ENCODE measurements at regions of chr2 and their contacts with region 1.

Region 1: DNA sequence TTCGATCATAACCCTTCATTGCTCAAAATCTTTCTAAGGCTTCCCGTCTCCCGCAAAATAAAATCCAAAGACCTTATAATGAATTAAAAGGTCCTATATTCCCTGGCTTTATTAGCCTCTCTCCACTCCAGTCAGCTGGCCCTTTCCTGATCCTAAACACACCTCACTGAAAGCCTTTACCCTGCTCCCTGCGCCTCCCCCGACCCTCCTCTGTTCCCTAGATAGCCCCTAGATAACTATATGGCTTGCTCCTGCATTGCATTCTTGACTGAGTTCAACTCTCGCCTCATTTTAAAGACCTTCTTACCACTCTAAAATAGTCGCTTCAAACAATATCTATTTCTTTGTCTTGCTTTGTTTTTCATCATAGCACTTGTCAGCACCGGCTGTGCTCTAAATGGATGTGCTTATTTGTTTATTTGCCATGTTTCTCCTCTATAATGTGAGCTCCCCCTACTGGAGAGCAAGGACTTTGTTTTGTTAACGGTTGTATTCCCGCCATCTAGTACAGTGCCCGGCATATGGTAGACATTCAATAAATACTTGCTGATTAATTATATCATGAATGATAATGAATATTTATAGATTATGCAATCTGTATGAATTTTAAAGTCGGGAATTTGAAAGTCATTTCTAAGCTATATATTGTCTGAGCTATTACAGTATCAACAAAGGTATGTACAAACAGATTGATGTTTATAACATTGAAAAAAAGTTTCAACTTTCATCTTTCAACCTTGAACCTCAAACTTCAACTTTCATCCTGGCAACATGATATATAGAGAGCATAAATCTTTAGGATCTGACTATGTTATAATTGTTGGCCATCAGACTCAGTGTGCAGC is 32.4 kb upstream of the VIT start:
- DNase-seq: no peak
- H3K4me3 ChIP-seq: no peak overlapping the region
- H3K27ac ChIP-seq: no peak overlapping the region
- H3K27me3 ChIP-seq: no peaks in the 10 kb centered on the region
- CTCF ChIP-seq: peak; percentile 74

Region 2: DNA sequence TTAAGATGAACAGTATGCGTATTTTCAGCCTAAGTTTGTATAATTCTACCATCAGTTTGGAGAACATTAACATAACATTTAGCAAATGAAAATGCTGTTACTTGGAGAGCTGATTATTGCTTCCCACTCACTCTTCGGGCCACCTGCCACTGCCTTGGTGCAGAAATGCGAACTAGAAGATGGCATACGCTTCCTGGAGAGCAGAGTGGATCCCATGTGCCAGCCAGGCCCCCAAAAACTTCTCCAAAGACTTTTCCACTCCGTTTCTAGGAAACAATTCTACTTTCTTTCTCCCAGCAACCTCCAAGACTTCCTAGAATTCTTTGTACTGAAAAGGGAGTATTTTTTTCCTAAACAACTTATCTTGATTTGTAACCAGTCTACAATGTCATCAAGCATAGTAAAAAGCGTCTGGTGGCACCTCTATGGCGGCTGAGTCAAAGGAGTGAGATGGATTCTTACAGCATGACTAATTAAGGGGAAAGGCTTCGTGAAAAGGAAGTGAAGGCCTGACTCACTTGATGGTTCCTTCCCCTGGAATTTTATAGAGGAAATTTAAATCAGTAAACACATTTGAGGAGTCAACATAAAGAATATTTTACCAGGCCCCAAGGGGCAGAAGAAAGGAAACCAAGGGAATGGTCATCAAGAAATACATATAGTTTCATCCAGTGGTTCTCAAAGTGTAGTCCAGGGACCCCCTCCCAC is 102.7 kb before region 1 on chr2:
- CTCF ChIA-PET with region 1: interaction called, 29 read pairs
- POLR2A ChIA-PET with region 1: interaction called, 5 read pairs
- DNase-seq: peak; percentile 66
- H3K4me3 ChIP-seq: no peak overlapping the region
- H3K27ac ChIP-seq: peak overlapping the region; percentile 83
- H3K27me3 ChIP-seq: no peaks in the 10 kb centered on the region
- CTCF ChIP-seq: no peak

Region 3: DNA sequence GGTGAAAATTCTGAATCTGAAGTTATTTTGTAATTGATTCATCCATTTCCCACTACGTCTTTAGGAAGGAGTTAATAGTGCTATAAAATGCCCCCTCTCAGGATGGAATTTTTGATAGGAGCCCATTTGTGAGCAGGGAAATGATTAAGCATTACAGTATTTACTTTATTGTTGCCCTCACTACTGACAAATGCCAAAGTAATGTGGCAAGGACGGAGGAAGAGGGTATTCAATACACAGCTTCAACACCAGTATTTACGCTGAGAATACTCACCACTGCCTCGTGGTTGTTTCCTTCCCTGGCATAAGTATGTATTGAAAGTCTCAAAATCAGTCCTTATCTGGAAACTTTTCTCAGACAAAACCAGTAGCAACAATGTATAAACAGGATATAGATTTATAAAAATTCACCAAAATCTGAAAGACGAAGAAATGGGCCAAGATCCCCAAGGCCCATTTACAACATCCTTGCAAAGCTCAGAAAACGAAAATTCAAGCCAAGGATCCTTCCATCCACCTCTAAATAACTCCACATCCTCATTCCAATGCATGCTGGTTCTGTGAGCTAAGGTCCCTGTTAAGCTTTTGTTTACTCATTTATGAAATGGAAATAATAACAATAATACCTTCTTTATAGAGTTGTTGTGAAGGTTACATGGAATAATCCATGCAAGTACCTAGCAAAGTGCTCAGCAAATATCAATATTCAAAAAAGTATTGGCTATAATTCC is 95.4 kb before region 1 on chr2:
- CTCF ChIA-PET with region 1: interaction called, 29 read pairs
- POLR2A ChIA-PET with region 1: no interaction called
- DNase-seq: no peak
- H3K4me3 ChIP-seq: peak overlapping the region; percentile 20
- H3K27ac ChIP-seq: no peak overlapping the region
- H3K27me3 ChIP-seq: no peaks in the 10 kb centered on the region
- CTCF ChIP-seq: no peak

Region 4: GRCh38 chr2:36650031-36650430 is 14.0 kb before region 1 on chr2:
- CTCF ChIA-PET with region 1: interaction called, 15 read pairs
- POLR2A ChIA-PET with region 1: no interaction called
- DNase-seq: no peak
- H3K4me3 ChIP-seq: no peak overlapping the region
- H3K27ac ChIP-seq: no peak overlapping the region
- H3K27me3 ChIP-seq: no peaks in the 10 kb centered on the region
- CTCF ChIP-seq: no peak

Region 5: DNA sequence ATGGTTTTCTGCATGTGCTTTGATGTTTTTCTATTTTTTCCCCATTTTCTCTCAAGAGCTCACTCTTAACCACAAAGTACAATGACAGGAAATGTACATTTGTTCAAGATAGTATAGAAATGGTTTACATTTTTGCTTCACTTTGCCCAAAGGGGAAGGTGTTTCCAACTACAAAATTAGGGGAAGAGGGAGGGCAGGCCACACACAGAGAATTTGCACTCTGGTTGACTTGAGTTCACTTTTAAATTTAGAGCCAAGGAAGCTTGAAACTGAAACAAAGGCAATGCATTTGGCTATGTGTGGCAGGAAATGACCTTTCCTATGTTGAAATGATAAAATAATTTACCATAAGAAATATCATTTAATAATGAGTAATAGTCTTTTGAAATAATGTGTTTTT is 13.3 kb after region 1 on chr2:
- CTCF ChIA-PET with region 1: interaction called, 20 read pairs
- POLR2A ChIA-PET with region 1: no interaction called
- DNase-seq: no peak
- H3K4me3 ChIP-seq: no peak overlapping the region
- H3K27ac ChIP-seq: no peak overlapping the region
- H3K27me3 ChIP-seq: no peaks in the 10 kb centered on the region
- CTCF ChIP-seq: no peak